B cell (primary cell): ENCODE measurements at regions of chr19 and their contacts with region 1.

Region 1: DNA sequence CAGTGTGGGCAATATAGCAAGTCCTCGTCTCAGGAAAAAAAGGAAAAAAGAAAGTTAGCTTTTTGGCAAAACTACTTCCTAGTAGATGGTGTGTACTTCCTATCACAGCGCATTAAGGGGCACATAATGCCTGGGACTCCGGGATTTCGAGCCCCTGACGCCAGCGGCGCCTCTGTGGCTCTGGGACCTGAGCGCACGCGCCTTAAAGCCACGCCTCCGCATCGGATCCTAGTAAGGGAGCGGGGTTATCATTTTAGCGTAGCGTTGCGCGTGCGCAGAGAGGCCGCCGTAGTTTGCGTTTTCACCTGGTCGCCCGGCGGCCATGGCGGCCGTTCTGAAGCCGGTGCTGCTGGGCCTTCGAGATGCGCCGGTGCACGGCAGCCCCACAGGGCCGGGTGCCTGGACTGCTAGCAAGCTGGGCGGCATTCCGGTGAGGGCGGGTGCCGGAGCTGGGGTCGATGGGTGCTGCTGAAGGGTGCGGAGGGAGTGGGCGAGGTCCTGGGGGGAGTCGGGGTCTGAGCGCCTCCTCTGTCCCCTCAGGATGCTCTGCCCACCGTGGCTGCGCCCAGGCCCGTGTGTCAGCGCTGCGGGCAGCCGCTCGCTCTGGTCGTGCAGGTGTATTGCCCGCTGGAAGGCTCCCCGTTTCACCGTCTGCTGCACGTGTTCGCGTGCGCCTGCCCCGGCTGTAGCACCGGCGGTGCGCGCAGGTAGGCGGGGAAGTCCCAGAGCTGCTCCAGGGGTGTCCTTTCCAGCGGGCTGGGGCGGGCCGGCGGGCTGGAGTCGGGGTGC is at the start of gene PDCD2L:
- DNase-seq: peak; percentile 94
- ATAC-seq: peak; percentile 95
- H3K4me3 ChIP-seq: peak within 1 kb of the TSS; percentile 57 to 99 (median 97)
- H3K4me3 Mint-ChIP-seq: peak within 1 kb of the TSS; percentile 95
- H3K27ac ChIP-seq: peak within 1 kb of the TSS; percentile 46 to 55
- H3K27ac Mint-ChIP-seq: peak within 1 kb of the TSS; percentile 86
- H3K4me1 ChIP-seq: peaks cover 0 to 17% of the 10 kb centered on the region in 2 donors
- H3K4me1 Mint-ChIP-seq: peaks cover 20% of the 10 kb centered on the region
- H3K27me3 ChIP-seq: no peaks in the 10 kb centered on the region
- H3K27me3 Mint-ChIP-seq: no peaks in the 10 kb centered on the region
- CTCF ChIP-seq: no peak
- total RNA-seq, gene PDCD2L: 11.3 and 12.6 TPM in 2 replicates

Region 2: GRCh38 chr19:34134190-34135053 is 269.9 kb before region 1 on chr19:
- CTCF ChIA-PET with region 1: no interaction called
- POLR2A ChIA-PET with region 1: no interaction called
- intact Hi-C with region 1: loop called (anchors 1 kb)
- DNase-seq: peak; percentile 93
- ATAC-seq: peak; percentile 97
- H3K4me3 ChIP-seq: peak overlapping the region; percentile 65 to 95 (median 80)
- H3K4me3 Mint-ChIP-seq: peak overlapping the region; percentile 97
- H3K27ac ChIP-seq: peak overlapping the region; percentile 59 to 86
- H3K27ac Mint-ChIP-seq: peak overlapping the region; percentile 94
- H3K4me1 ChIP-seq: peaks cover 3 to 8% of the 10 kb centered on the region in 2 donors
- H3K4me1 Mint-ChIP-seq: peaks cover 14% of the 10 kb centered on the region
- H3K27me3 ChIP-seq: no peaks in the 10 kb centered on the region
- H3K27me3 Mint-ChIP-seq: peaks cover 4% of the 10 kb centered on the region
- CTCF ChIP-seq: no peak

Region 3: GRCh38 chr19:34359140-34359953 is 45.0 kb before region 1 on chr19:
- CTCF ChIA-PET with region 1: no interaction called
- POLR2A ChIA-PET with region 1: no interaction called
- intact Hi-C with region 1: loop called (anchors 1 kb)
- DNase-seq: peak; percentile 96
- ATAC-seq: peak; percentile 92
- H3K4me3 ChIP-seq: peak overlapping the region; percentile 54 to 67 (median 56)
- H3K4me3 Mint-ChIP-seq: peak overlapping the region; percentile 96
- H3K27ac ChIP-seq: peak overlapping the region; percentile 59 to 68
- H3K27ac Mint-ChIP-seq: peak overlapping the region; percentile 97
- H3K4me1 ChIP-seq: peaks cover 12 to 20% of the 10 kb centered on the region in 2 donors
- H3K4me1 Mint-ChIP-seq: peaks cover 26% of the 10 kb centered on the region
- H3K27me3 ChIP-seq: no peaks in the 10 kb centered on the region
- H3K27me3 Mint-ChIP-seq: no peaks in the 10 kb centered on the region
- CTCF ChIP-seq: peak; percentile 66

Region 4: GRCh38 chr19:34428549-34429285 is 24.4 kb after region 1 on chr19:
- CTCF ChIA-PET with region 1: interaction called, 4 read pairs
- POLR2A ChIA-PET with region 1: interaction called, 3 read pairs
- intact Hi-C with region 1: loop called (anchors 1 kb)
- DNase-seq: no peak
- ATAC-seq: peak; percentile 37
- H3K4me3 ChIP-seq: peak overlapping the region; percentile 70 to 93 (median 78)
- H3K4me3 Mint-ChIP-seq: peak overlapping the region; percentile 98
- H3K27ac ChIP-seq: peak overlapping the region; percentile 65 to 90
- H3K27ac Mint-ChIP-seq: peak overlapping the region; percentile 96
- H3K4me1 ChIP-seq: peaks cover 22 to 24% of the 10 kb centered on the region in 2 donors
- H3K4me1 Mint-ChIP-seq: peaks cover 37% of the 10 kb centered on the region
- H3K27me3 ChIP-seq: no peaks in the 10 kb centered on the region
- H3K27me3 Mint-ChIP-seq: no peaks in the 10 kb centered on the region
- CTCF ChIP-seq: no peak

Region 5: DNA sequence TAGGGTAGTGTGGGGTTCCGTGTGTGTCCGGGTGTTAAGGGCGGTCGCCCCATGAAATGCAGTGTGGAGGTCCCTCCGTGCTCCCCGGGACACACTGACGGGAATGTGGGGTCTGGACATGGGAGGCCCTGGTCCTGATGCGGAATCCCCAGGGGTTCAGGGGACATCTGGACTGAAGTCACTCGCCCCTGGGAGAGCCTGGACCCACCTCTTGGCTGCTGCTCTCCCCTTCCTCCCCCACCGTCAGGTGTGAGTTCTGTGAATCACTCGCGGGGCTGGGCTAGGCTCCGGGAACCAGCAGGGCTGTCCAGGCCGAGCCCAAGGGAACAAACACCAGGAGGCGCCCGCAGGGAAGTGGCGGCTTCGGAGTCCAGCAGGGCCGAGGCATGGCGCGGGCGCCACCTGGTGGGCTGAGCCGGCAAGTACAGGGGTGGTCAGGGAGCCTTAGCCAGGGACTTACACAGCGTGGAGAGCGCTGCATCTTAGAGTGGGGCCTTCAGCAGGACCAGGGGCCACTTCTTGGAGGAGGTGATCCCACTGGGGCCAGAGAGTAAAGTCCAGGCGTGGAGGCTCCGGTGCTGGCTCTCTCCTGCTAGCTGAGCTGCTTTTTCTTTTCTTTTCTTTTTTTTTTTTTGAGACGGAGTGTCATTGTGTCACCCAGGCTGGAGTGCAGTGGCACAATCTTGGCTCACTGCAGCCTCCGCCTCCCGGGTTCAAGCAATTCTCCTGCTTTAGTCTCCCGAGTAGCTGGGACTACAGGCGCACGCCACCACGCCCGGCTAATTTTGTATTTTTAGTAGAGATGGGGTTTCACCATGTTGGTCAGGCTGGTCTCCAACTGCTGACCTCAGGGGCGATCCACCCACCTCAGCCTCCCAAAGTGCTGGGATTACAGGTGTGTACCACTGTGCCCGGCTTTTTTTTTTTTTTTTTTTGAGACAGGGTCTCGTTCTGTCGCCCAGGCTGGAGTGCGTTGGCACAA is 97.3 kb after region 1 on chr19:
- CTCF ChIA-PET with region 1: no interaction called
- POLR2A ChIA-PET with region 1: no interaction called
- intact Hi-C with region 1: loop called (anchors 1 kb)
- DNase-seq: peak; percentile 85
- ATAC-seq: peak; percentile 69
- H3K4me3 ChIP-seq: peak overlapping the region in 4 of 5 experiments; percentile 14 to 57 (median 46)
- H3K4me3 Mint-ChIP-seq: peak overlapping the region; percentile 70
- H3K27ac ChIP-seq: no peak overlapping the region
- H3K27ac Mint-ChIP-seq: peak overlapping the region; percentile 10
- H3K4me1 ChIP-seq: peaks cover 12 to 23% of the 10 kb centered on the region in 2 donors
- H3K4me1 Mint-ChIP-seq: peaks cover 10% of the 10 kb centered on the region
- H3K27me3 ChIP-seq: peaks cover 0 to 17% (median 4%) of the 10 kb centered on the region in 4 experiments
- H3K27me3 Mint-ChIP-seq: peaks cover 17% of the 10 kb centered on the region
- CTCF ChIP-seq: peak; percentile 90